ENCODE measurements at regions of chr22 and their contacts with region 1.

Region 1: GRCh38 chr22:18077639-18078328 is at the start of gene PEX26:
- DNase-seq: peak; percentile 95
- ATAC-seq: peak; percentile 99
- H3K4me3 ChIP-seq: peak within 1 kb of the TSS; percentile 87
- H3K27ac ChIP-seq: peak within 1 kb of the TSS; percentile 92
- H3K4me1 ChIP-seq: peaks cover 2% of the 10 kb centered on the region
- H3K27me3 ChIP-seq: no peaks in the 10 kb centered on the region
- CTCF ChIP-seq: no peak
- POLR2A ChIP-seq: no peak
- RAD21 ChIP-seq: peak; percentile 11; the same call in 1 of the 2 replicates
- total RNA-seq, gene PEX26: 10.6 and 12.2 TPM in 2 replicates

Region 2: GRCh38 chr22:17077255-17077654 is 1000.5 kb before region 1 on chr22:
- CTCF ChIA-PET with region 1: no interaction called
- POLR2A ChIA-PET with region 1: no interaction called
- dilution Hi-C with region 1: no loop called
- in situ Hi-C with region 1: no loop called
- intact Hi-C with region 1: loop called (anchors 10 kb)
- DNase-seq: peak; percentile 88
- ATAC-seq: peak; percentile 83
- H3K4me3 ChIP-seq: no peak overlapping the region
- H3K27ac ChIP-seq: no peak overlapping the region
- H3K4me1 ChIP-seq: peaks cover 8% of the 10 kb centered on the region
- H3K27me3 ChIP-seq: no peaks in the 10 kb centered on the region; the same call in 1 of the 2 replicates
- CTCF ChIP-seq: no peak
- POLR2A ChIP-seq: no peak
- RAD21 ChIP-seq: no peak

Region 3: DNA sequence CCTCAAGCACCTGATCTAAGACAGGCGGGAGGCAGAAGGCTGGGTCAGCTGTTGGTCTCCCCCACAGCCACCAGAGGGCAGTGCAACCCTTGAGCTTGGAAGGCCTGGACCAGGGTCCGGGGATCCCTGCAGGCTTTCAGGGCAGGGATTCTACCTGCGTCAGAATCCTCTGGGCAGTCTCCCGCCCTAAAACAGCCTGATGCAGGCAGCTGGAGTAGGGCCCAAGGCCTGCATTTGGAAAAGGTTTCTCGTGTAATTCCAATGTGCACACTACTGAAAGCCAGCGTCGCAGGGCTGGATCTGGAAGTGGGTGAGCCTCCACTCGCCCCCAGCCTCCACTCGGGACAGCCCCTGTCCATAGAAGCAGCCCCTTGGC is 335.3 kb before region 1 on chr22:
- CTCF ChIA-PET with region 1: interaction called, 3 read pairs
- POLR2A ChIA-PET with region 1: no interaction called
- dilution Hi-C with region 1: no loop called
- in situ Hi-C with region 1: no loop called
- intact Hi-C with region 1: loop called (anchors 5 kb)
- DNase-seq: peak; percentile 66
- ATAC-seq: peak; percentile 85
- H3K4me3 ChIP-seq: no peak overlapping the region
- H3K27ac ChIP-seq: no peak overlapping the region
- H3K4me1 ChIP-seq: peaks cover 5% of the 10 kb centered on the region; the same call in 1 of the 2 replicates
- H3K27me3 ChIP-seq: no peaks in the 10 kb centered on the region
- CTCF ChIP-seq: peak; percentile 69
- POLR2A ChIP-seq: no peak
- RAD21 ChIP-seq: peak; percentile 81

Region 4: GRCh38 chr22:17830043-17830961 is 247.5 kb before region 1 on chr22:
- CTCF ChIA-PET with region 1: interaction called, 22 read pairs
- POLR2A ChIA-PET with region 1: no interaction called
- dilution Hi-C with region 1: no loop called
- in situ Hi-C with region 1: loop called (anchors 5 kb)
- intact Hi-C with region 1: loop called (anchors 1 kb)
- DNase-seq: peak; percentile 75
- ATAC-seq: peak; percentile 100
- H3K4me3 ChIP-seq: no peak overlapping the region
- H3K27ac ChIP-seq: no peak overlapping the region
- H3K4me1 ChIP-seq: no peaks in the 10 kb centered on the region
- H3K27me3 ChIP-seq: no peaks in the 10 kb centered on the region
- CTCF ChIP-seq: peak; percentile 98
- POLR2A ChIP-seq: no peak; the same call in 1 of the 2 replicates
- RAD21 ChIP-seq: peak; percentile 98

Region 5: DNA sequence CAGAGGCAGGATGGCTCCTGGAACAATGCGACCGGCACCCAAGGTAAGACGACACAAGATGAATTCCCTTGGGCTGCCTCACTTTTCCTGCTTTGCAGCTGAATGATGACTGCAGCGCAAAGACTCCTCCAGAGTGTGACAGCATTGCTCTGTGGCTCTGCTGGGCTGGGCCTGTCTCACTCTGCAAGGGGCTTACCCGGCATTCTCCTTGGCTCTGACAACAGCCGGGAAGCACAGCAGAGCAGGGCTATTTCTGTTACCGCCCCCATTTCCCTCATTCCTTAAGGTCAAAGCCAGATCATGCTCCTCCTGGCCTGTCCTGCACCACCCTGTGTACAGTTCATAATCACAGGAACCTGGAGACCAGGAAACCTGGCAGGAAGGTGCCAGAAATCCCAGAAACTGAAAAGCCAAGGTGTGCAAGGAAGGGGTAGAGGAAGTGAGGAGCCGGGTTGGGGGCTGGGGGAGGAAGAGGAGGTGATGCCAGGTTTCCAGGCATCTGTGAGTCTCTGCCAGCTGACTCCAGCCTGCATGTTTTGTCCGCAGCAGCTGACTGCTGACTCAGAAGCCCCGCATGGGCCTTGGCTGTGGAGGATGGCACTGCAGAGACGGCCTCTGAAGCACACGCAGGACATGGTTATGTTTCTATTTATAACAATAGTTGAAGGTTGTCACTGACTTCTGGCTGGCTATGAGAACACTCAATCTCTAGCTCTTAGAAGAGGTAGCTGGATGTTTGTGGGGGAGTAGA is 167.0 kb before region 1 on chr22:
- CTCF ChIA-PET with region 1: interaction called, 20 read pairs
- POLR2A ChIA-PET with region 1: interaction called, 3 read pairs
- dilution Hi-C with region 1: no loop called
- in situ Hi-C with region 1: no loop called
- intact Hi-C with region 1: loop called (anchors 1 kb)
- DNase-seq: peak; percentile 91
- ATAC-seq: peak; percentile 99
- H3K4me3 ChIP-seq: no peak overlapping the region
- H3K27ac ChIP-seq: peak overlapping the region; percentile 64
- H3K4me1 ChIP-seq: peaks cover 17% of the 10 kb centered on the region
- H3K27me3 ChIP-seq: no peaks in the 10 kb centered on the region
- CTCF ChIP-seq: peak; percentile 74
- POLR2A ChIP-seq: peak; percentile 58; the same call in 1 of the 2 replicates
- RAD21 ChIP-seq: peak; percentile 87

Region 6: GRCh38 chr22:18024276-18024947 is 53.4 kb before region 1 on chr22 and contains the start of gene MICAL3:
- CTCF ChIA-PET with region 1: interaction called, 3 read pairs
- POLR2A ChIA-PET with region 1: no interaction called
- dilution Hi-C with region 1: no loop called
- in situ Hi-C with region 1: no loop called
- intact Hi-C with region 1: loop called (anchors 2 kb)
- DNase-seq: peak; percentile 64
- ATAC-seq: peak; percentile 91
- H3K4me3 ChIP-seq: peak within 1 kb of the TSS; percentile 52
- H3K27ac ChIP-seq: peak within 1 kb of the TSS; percentile 21; the same call in 1 of the 2 replicates
- H3K4me1 ChIP-seq: peaks cover 2% of the 10 kb centered on the region; the same call in 1 of the 2 replicates
- H3K27me3 ChIP-seq: no peaks in the 10 kb centered on the region
- CTCF ChIP-seq: peak; percentile 78
- POLR2A ChIP-seq: no peak
- RAD21 ChIP-seq: peak; percentile 63
- total RNA-seq, gene MICAL3: 16.1 and 17.6 TPM in 2 replicates

Region 7: GRCh38 chr22:18065256-18065655 is 12.5 kb before region 1 on chr22:
- CTCF ChIA-PET with region 1: interaction called, 12 read pairs
- POLR2A ChIA-PET with region 1: interaction called, 3 read pairs
- dilution Hi-C with region 1: no loop called
- in situ Hi-C with region 1: no loop called
- intact Hi-C with region 1: no loop called
- DNase-seq: no peak
- ATAC-seq: no peak
- H3K4me3 ChIP-seq: no peak overlapping the region
- H3K27ac ChIP-seq: no peak overlapping the region
- H3K4me1 ChIP-seq: peaks cover 12% of the 10 kb centered on the region
- H3K27me3 ChIP-seq: no peaks in the 10 kb centered on the region
- CTCF ChIP-seq: no peak
- POLR2A ChIP-seq: no peak
- RAD21 ChIP-seq: no peak

Measured in IMR-90 (cell line).